AG04449 (cell line): ENCODE measurements at regions of chr12 and their contacts with region 1.

Region 1: GRCh38 chr12:104201238-104202001 is 14.2 kb upstream of the TXNRD1 start:
- DNase-seq: no peak
- H3K4me3 ChIP-seq: no peak overlapping the region
- CTCF ChIP-seq: peak; percentile 79

Region 2: GRCh38 chr12:104294845-104295688 is 93.6 kb after region 1 on chr12:
- CTCF ChIA-PET with region 1: interaction called, 22 read pairs
- POLR2A ChIA-PET with region 1: no interaction called
- DNase-seq: no peak
- H3K4me3 ChIP-seq: no peak overlapping the region
- CTCF ChIP-seq: no peak

Region 3: DNA sequence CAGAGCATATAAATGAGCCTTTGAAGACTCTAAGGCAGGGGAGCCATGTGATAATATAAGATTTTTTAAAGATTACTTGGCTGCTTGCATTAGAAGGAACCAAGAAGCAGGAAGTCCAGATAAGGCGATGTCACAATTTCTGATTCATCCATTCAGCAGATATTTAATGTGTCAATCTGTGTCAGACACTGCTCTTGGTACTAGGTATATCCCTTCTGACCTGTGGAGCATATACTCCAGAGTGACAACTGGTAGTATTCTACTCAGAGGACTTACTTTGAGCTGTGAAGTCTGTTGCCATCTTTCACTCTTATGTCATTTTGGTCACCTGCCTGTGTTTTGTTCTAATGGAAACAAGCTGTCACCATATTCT is 112.8 kb after region 1 on chr12:
- CTCF ChIA-PET with region 1: interaction called, 12 read pairs
- POLR2A ChIA-PET with region 1: no interaction called
- DNase-seq: no peak
- H3K4me3 ChIP-seq: no peak overlapping the region
- CTCF ChIP-seq: no peak

Region 4: DNA sequence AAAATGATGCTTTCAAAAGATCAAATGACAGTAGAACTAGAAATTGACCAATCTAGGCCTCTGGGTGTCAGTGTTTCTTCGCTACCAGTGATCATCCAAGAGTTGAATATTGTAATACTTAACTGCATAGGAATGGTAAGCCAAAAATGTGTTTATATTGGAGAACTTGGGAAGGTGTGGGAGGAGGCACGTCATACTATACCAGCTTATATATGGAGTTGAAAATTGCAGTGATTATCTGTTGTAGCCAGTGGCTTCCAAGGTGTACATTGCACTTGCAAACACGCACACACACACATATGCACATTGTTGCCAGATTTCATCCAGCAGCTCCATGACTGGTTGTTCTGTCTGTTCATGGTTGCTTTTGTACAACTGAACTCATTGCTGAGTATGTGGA is 138.2 kb after region 1 on chr12:
- CTCF ChIA-PET with region 1: interaction called, 13 read pairs
- POLR2A ChIA-PET with region 1: no interaction called
- DNase-seq: no peak
- H3K4me3 ChIP-seq: no peak overlapping the region
- CTCF ChIP-seq: no peak

Region 5: DNA sequence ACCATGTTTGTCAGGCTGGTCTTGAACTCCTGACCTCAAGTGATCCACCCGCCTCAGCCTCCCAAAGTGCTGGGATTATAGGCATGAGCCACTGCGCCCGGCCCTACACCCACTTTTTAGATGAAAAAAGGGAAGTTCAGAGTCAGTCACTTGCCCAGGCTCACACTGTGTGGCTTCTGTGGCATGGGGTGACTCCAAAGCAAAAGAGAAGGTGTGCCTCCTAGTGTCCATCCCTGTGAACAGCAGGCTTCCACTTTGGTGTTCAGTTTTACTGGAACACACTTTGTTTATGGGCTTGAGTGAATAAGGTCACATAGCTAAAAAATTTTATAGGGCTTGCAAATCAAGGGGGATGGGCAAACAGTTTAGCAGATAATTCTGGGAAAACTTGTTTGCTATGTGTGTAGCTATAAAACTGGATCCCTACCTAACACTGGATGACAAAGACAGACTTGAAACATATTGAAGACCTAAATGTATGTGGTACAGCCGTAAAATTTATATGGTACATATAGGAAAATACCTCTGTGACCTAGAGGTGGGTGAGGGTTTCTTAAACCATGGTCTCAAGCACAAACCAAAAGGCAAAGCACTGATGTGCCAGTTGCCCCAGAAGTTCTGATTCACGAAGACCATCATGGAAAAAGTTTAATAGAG is 157.1 kb after region 1 on chr12:
- CTCF ChIA-PET with region 1: interaction called, 12 read pairs
- POLR2A ChIA-PET with region 1: no interaction called
- DNase-seq: no peak
- H3K4me3 ChIP-seq: no peak overlapping the region
- CTCF ChIP-seq: peak; percentile 70